Ovary (tissue), 10 donors: ENCODE measurements at regions of chr20 and their contacts with region 1.

Region 1: DNA sequence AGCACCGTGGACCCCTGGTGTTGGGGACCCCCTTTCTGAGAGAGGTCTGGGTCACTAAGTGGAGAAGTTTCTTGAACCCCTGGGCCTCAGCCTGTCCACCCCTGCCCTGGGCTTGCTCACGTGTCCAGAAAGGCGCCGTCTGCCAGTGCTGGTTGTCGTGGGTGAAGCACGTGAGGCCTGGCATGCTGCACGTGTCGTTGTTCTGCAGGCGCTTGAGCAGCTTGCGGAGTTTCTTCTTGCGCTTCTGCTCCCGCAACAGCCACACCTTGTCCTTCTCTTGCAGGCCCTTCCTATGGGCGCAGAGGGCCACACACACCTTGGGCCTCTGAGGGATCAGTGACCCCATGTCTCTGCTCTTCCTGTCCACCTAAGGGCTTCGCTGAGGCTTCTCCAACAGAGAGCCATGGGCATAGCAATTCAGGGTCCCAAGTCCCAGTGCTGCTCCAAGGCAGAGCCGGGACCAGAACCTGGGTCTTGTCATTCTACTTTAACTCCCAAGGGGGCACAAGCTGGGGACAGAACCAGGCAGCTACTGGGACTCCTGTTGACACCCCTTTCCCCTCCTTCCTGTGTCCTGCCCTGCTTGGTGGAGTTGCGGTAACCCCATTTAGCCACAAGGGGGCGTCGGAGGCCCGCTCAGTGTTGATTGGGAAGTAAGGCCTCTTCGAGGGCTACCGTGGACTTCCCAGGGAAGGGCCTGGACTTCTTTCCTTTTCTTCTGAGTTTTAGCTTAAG is 121.8 kb downstream of the SULF2 start:
- DNase-seq: peak; percentile 75 to 90 (median 86)
- H3K4me3 ChIP-seq: no peak overlapping the region
- H3K27ac ChIP-seq: peak overlapping the region; percentile 3 to 25
- H3K4me1 ChIP-seq: peaks cover 10% of the 10 kb centered on the region
- H3K27me3 ChIP-seq: no peaks in the 10 kb centered on the region
- CTCF ChIP-seq: peak; percentile 85 to 96 (median 93)
- EP300 ChIP-seq: no peak
- POLR2A ChIP-seq: no peak

Region 2: DNA sequence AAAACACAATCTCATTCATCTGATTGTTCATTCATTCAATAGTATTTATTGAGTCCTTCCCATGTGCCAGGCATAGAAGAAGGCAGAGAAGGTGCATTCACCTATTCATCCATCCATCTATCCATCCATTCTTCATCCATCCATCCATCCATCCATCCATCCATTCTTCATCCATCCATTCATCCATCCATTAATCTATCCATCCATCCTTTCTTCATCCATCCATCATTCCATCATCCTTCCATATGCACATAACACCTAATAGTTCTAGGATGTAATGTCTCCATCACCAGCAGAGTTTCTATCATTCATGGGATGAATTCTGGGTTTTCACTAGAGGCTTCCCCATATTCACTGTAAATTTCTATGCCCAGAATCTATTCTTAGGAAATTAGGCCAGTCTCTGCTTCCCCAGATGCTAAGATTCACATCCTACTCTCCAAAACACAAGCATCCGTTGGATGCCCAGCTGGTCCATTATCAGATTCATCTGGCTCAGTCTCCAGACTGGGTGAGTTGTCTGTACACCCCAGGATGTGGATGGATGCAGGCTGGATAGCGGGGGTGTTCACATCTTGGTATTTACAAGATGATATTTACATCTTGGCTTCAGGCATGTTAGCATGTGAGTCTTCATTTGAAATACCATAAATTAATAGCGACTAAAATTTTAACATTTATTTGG is 639.5 kb after region 1 on chr20:
- intact Hi-C with region 1: loop called in 1 of 4 experiments (anchors 5 kb)
- DNase-seq: no peak
- H3K4me3 ChIP-seq: no peak overlapping the region
- H3K27ac ChIP-seq: no peak overlapping the region
- H3K4me1 ChIP-seq: peaks cover 6% of the 10 kb centered on the region
- H3K27me3 ChIP-seq: no peaks in the 10 kb centered on the region
- CTCF ChIP-seq: no peak
- EP300 ChIP-seq: no peak
- POLR2A ChIP-seq: no peak